ENCODE measurements at regions of chr1 and their contacts with region 1.

Region 1: DNA sequence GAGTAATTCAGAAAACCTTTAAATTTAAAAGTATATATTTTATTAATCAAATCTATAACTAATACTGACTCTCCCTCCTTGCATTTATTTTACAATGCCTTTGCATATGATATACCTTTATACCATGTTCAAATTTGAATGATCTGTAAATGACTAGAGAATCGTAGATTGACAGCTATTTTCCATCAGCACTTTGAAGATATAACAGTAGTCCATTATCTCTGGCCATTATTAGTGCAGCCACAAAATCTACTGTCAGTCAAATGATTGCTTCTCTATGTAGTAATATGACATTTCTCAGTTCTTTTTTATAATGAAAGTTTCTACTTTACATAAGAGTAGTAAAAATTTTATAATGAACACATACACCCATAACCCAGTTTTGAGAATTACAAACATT is 1054.8 kb upstream of the B3GALT2 start:
- DNase-seq: no peak
- H3K4me3 Mint-ChIP-seq: no peak overlapping the region
- H3K27ac Mint-ChIP-seq: no peak overlapping the region
- H3K4me1 Mint-ChIP-seq: no peaks in the 10 kb centered on the region
- H3K27me3 Mint-ChIP-seq: no peaks in the 10 kb centered on the region
- CTCF ChIP-seq: no peak

Region 2: DNA sequence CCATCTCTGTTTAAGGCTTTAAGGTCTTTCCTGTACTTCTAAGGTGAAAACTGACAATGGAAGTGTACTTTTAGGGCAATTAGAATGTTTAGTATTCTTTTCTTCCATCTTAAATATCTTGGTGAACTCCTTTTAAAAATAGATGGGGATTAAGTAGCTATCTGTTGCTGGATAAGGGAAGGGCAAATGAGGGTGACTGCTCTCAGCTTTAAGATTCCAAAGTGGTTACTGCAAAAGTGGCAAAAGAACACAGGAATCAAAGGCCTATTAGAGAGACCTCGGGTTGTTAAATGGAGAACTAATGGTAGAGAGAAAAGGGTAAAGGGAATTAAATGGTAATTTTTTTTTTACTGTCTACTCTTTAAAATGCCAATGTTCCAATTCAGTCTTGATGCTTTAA is 280.7 kb before region 1 on chr1:
- CTCF ChIA-PET with region 1: no interaction called
- intact Hi-C with region 1: no loop called
- DNase-seq: no peak
- H3K4me3 Mint-ChIP-seq: no peak overlapping the region
- H3K27ac Mint-ChIP-seq: no peak overlapping the region
- H3K4me1 Mint-ChIP-seq: peaks cover 8% of the 10 kb centered on the region
- H3K27me3 Mint-ChIP-seq: no peaks in the 10 kb centered on the region
- CTCF ChIP-seq: no peak

Region 3: GRCh38 chr1:194252199-194252598 is 11.0 kb after region 1 on chr1:
- CTCF ChIA-PET with region 1: no interaction called
- intact Hi-C with region 1: loop called (anchors 1 kb)
- DNase-seq: no peak
- H3K4me3 Mint-ChIP-seq: no peak overlapping the region
- H3K27ac Mint-ChIP-seq: no peak overlapping the region
- H3K4me1 Mint-ChIP-seq: peaks cover 13% of the 10 kb centered on the region
- H3K27me3 Mint-ChIP-seq: no peaks in the 10 kb centered on the region
- CTCF ChIP-seq: no peak

Region 4: GRCh38 chr1:194300340-194300739 is 59.1 kb after region 1 on chr1:
- CTCF ChIA-PET with region 1: no interaction called
- intact Hi-C with region 1: no loop called
- DNase-seq: no peak
- H3K4me3 Mint-ChIP-seq: no peak overlapping the region
- H3K27ac Mint-ChIP-seq: no peak overlapping the region
- H3K4me1 Mint-ChIP-seq: peaks cover 13% of the 10 kb centered on the region
- H3K27me3 Mint-ChIP-seq: no peaks in the 10 kb centered on the region
- CTCF ChIP-seq: no peak